K562 (cell line): ENCODE measurements at regions of chr22 and their contacts with region 1.

Region 1: GRCh38 chr22:35467681-35468434 is 67.9 kb downstream of the MCM5 start:
- DNase-seq: no peak
- ATAC-seq: no peak
- H3K4me3 ChIP-seq: no peak overlapping the region
- H3K27ac ChIP-seq: no peak overlapping the region
- H3K4me1 ChIP-seq: peaks cover 0 to 3% of the 10 kb centered on the region in 2 experiments; a peak in 2 of 5 replicates
- H3K27me3 ChIP-seq: no peaks in the 10 kb centered on the region
- CTCF ChIP-seq: no peak
- EP300 ChIP-seq: no peak
- POLR2A ChIP-seq: no peak
- RAD21 ChIP-seq: no peak

Region 2: GRCh38 chr22:35350539-35351503 is 117.0 kb before region 1 on chr22:
- CTCF ChIA-PET with region 1: no interaction called
- POLR2A ChIA-PET with region 1: no interaction called
- in situ Hi-C with region 1: no loop called
- intact Hi-C with region 1: loop called (anchors 10 kb)
- DNase-seq: peak; percentile 87 to 94 (median 92)
- ATAC-seq: peak; percentile 99
- H3K4me3 ChIP-seq: peak overlapping the region; percentile 45
- H3K27ac ChIP-seq: no peak overlapping the region
- H3K4me1 ChIP-seq: peaks cover 5 to 23% of the 10 kb centered on the region in 2 experiments; a peak in 4 of 5 replicates
- H3K27me3 ChIP-seq: no peaks in the 10 kb centered on the region
- CTCF ChIP-seq: peak; percentile 76 to 82 (median 79)
- EP300 ChIP-seq: no peak
- POLR2A ChIP-seq: no peak
- RAD21 ChIP-seq: peak; percentile 85 to 87

Region 3: DNA sequence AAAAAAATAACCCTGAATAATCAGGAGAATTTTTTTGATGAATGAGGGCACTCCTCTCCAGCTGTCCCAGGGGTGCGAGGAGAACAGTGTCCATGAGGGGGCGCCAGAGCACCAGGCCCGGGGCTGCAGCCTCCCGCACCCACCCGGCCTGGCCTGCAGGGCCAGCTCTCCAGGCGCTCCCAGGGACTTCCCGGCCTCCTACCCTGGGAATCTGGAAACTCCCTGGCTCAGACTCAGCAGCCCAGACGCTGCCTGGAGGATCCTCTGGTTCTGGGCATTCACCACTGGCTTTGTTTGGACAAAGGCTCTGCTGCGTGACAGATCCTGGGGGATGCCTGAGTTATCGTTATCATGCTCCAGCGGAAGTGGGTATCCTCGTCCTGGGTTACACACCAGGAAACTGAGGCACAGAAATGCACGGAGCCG is 36.9 kb before region 1 on chr22:
- CTCF ChIA-PET with region 1: no interaction called
- POLR2A ChIA-PET with region 1: no interaction called
- in situ Hi-C with region 1: no loop called
- intact Hi-C with region 1: no loop called
- DNase-seq: peak; percentile 66 to 82 (median 74)
- ATAC-seq: peak; percentile 96
- H3K4me3 ChIP-seq: no peak overlapping the region
- H3K27ac ChIP-seq: no peak overlapping the region
- H3K4me1 ChIP-seq: peaks cover 0 to 2% of the 10 kb centered on the region in 2 experiments; a peak in 1 of 5 replicates
- H3K27me3 ChIP-seq: no peaks in the 10 kb centered on the region
- CTCF ChIP-seq: peak; percentile 71 to 93 (median 77)
- EP300 ChIP-seq: no peak
- POLR2A ChIP-seq: no peak
- RAD21 ChIP-seq: peak; percentile 57 to 65

Region 4: GRCh38 chr22:35446365-35446764 is 21.5 kb before region 1 on chr22:
- CTCF ChIA-PET with region 1: no interaction called
- POLR2A ChIA-PET with region 1: no interaction called
- in situ Hi-C with region 1: no loop called
- intact Hi-C with region 1: no loop called
- DNase-seq: no peak
- ATAC-seq: no peak
- H3K4me3 ChIP-seq: no peak overlapping the region
- H3K27ac ChIP-seq: no peak overlapping the region
- H3K4me1 ChIP-seq: peaks cover 7 to 17% of the 10 kb centered on the region in 2 experiments; a peak in 4 of 5 replicates
- H3K27me3 ChIP-seq: no peaks in the 10 kb centered on the region
- CTCF ChIP-seq: no peak
- EP300 ChIP-seq: no peak
- POLR2A ChIP-seq: no peak
- RAD21 ChIP-seq: no peak

Region 5: DNA sequence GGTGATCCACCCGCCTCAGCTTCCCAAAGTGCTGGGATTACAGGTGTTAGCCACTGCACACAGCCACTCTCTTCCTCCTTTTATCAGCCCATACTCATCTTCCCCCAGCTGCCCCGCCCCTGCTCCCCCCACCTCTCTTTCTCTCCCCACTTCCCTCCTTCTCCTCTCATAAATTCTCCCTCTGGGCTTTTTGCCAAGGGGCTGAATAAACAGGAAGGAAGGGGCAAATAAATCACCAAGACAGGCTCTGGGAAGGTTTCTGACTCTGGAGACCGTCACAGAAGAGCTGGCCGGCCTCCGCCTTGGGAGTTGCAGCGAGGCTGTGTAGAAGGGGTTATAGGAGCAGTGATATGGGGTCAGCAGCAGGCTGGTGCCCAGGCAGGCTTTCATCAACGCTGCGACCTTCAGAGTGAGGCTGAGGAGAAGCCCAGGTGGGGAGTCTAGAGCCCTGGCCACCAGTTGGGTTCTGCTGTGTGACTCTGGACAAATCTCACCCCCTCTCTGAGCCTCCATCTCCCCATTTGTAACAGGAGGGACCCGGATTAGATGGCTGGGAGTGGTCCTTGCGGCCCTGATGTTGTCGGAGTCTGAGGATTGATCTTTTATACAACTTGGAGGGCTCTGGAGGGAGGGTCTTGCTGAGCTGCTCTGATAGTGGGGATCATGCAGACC is 10.2 kb after region 1 on chr22:
- CTCF ChIA-PET with region 1: no interaction called
- POLR2A ChIA-PET with region 1: no interaction called
- in situ Hi-C with region 1: no loop called
- intact Hi-C with region 1: no loop called
- DNase-seq: peak; percentile 20 to 78 (median 43)
- ATAC-seq: peak; percentile 82
- H3K4me3 ChIP-seq: no peak overlapping the region
- H3K27ac ChIP-seq: no peak overlapping the region
- H3K4me1 ChIP-seq: peaks cover 12 to 20% of the 10 kb centered on the region in 2 experiments
- H3K27me3 ChIP-seq: no peaks in the 10 kb centered on the region; a peak in 1 of 5 replicates
- CTCF ChIP-seq: no peak
- EP300 ChIP-seq: peak; percentile 13; the same call in 1 of the 2 replicates
- POLR2A ChIP-seq: no peak
- RAD21 ChIP-seq: no peak

Region 6: GRCh38 chr22:35525687-35526332 is 58.0 kb after region 1 on chr22:
- CTCF ChIA-PET with region 1: no interaction called
- POLR2A ChIA-PET with region 1: no interaction called
- in situ Hi-C with region 1: no loop called
- intact Hi-C with region 1: no loop called
- DNase-seq: no peak
- ATAC-seq: no peak
- H3K4me3 ChIP-seq: no peak overlapping the region
- H3K27ac ChIP-seq: no peak overlapping the region
- H3K4me1 ChIP-seq: peaks cover 8 to 10% of the 10 kb centered on the region in 2 experiments; a peak in 3 of 5 replicates
- H3K27me3 ChIP-seq: peaks cover 0 to 12% of the 10 kb centered on the region in 2 experiments; a peak in 2 of 5 replicates
- CTCF ChIP-seq: no peak
- EP300 ChIP-seq: no peak
- POLR2A ChIP-seq: no peak
- RAD21 ChIP-seq: no peak